Mammary epithelial cell (primary cell): ENCODE measurements at regions of chr18 and their contacts with region 1.

Region 1: GRCh38 chr18:59823596-59824195 is 76.1 kb upstream of the PMAIP1 start:
- DNase-seq: peak; percentile 62
- H3K4me3 ChIP-seq: no peak overlapping the region
- H3K27ac ChIP-seq: no peak overlapping the region
- H3K4me1 ChIP-seq: no peaks in the 10 kb centered on the region
- H3K27me3 ChIP-seq: no peaks in the 10 kb centered on the region
- CTCF ChIP-seq: peak; percentile 90 to 93

Region 2: DNA sequence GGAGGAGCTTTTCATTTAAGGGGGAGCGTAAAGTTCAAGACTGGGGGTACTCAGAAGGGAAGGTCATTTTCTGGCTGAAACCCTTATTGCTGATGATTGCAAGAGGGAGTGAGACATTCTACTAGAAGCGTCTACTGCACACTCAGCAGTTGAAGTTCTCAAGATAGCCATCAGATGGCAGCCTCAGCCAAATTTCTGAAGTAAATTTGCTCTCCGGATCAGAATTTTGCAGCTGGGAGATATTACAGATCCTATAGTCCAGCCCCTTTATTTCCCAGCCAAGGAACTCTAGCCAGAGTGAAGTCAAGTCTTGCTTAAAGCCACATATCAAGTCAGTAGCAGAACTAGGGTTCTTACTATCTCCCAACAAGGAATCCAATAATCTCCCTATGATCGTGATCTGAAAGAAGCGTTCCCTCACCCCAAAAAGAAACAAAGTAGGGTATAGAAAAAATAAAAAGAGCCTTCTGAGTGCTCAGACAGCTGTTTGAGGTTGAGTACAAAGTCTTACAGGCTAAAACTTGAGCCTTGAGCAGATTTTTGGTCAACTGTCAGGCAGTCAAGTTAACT is 574.4 kb before region 1 on chr18:
- CTCF ChIA-PET with region 1: no interaction called
- dilution Hi-C with region 1: no loop called
- in situ Hi-C with region 1: no loop called
- intact Hi-C with region 1: loop called (anchors 1 kb)
- DNase-seq: peak; percentile 52
- H3K4me3 ChIP-seq: no peak overlapping the region
- H3K27ac ChIP-seq: no peak overlapping the region
- H3K4me1 ChIP-seq: no peaks in the 10 kb centered on the region
- H3K27me3 ChIP-seq: peaks cover 3% of the 10 kb centered on the region
- CTCF ChIP-seq: peak; percentile 73 to 84

Region 3: GRCh38 chr18:59459369-59460079 is 364.2 kb before region 1 on chr18:
- CTCF ChIA-PET with region 1: interaction called, 15 read pairs
- dilution Hi-C with region 1: no loop called
- in situ Hi-C with region 1: loop called (anchors 5 kb)
- intact Hi-C with region 1: loop called (anchors 1 kb)
- DNase-seq: peak; percentile 19
- H3K4me3 ChIP-seq: no peak overlapping the region
- H3K27ac ChIP-seq: no peak overlapping the region
- H3K4me1 ChIP-seq: peaks cover 6% of the 10 kb centered on the region
- H3K27me3 ChIP-seq: no peaks in the 10 kb centered on the region
- CTCF ChIP-seq: peak; percentile 52 to 53

Region 4: GRCh38 chr18:59639821-59640220 is 183.9 kb before region 1 on chr18:
- CTCF ChIA-PET with region 1: interaction called, 21 read pairs
- dilution Hi-C with region 1: no loop called
- in situ Hi-C with region 1: no loop called
- intact Hi-C with region 1: no loop called
- DNase-seq: no peak
- H3K4me3 ChIP-seq: no peak overlapping the region
- H3K27ac ChIP-seq: no peak overlapping the region
- H3K4me1 ChIP-seq: no peaks in the 10 kb centered on the region
- H3K27me3 ChIP-seq: no peaks in the 10 kb centered on the region
- CTCF ChIP-seq: no peak

Region 5: GRCh38 chr18:59705145-59705544 is 118.6 kb before region 1 on chr18:
- CTCF ChIA-PET with region 1: no interaction called
- dilution Hi-C with region 1: loop called (anchors 5 kb)
- in situ Hi-C with region 1: no loop called
- intact Hi-C with region 1: no loop called
- DNase-seq: no peak
- H3K4me3 ChIP-seq: no peak overlapping the region
- H3K27ac ChIP-seq: no peak overlapping the region
- H3K4me1 ChIP-seq: peaks cover 16% of the 10 kb centered on the region
- H3K27me3 ChIP-seq: no peaks in the 10 kb centered on the region
- CTCF ChIP-seq: no peak

Region 6: DNA sequence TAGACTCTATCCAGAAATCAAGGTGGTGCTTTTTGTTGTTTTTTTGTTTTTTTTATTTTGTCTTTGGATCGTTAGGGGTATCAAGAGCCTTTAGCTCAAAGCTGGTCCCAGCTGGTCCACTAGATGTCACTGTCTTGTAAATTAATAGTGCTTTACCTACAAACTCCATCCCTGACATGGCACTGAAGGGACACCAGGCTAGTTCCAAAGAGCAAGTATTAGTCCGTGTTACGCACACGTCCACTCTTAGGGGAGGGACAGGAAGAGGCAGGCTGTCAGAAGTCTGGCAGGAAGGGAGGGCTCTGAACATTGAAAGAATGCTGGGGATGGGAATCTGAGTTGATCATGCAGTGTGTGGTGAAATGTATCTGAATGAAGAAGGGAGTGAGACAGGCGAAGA is 40.6 kb before region 1 on chr18:
- CTCF ChIA-PET with region 1: interaction called, 14 read pairs
- dilution Hi-C with region 1: no loop called
- in situ Hi-C with region 1: no loop called
- intact Hi-C with region 1: loop called (anchors 1 kb)
- DNase-seq: peak; percentile 47
- H3K4me3 ChIP-seq: no peak overlapping the region
- H3K27ac ChIP-seq: no peak overlapping the region
- H3K4me1 ChIP-seq: peaks cover 21% of the 10 kb centered on the region
- H3K27me3 ChIP-seq: no peaks in the 10 kb centered on the region
- CTCF ChIP-seq: peak; percentile 58 to 68